GM10248 (cell line): ENCODE measurements at regions of chr5 and their contacts with region 1.

Region 1: DNA sequence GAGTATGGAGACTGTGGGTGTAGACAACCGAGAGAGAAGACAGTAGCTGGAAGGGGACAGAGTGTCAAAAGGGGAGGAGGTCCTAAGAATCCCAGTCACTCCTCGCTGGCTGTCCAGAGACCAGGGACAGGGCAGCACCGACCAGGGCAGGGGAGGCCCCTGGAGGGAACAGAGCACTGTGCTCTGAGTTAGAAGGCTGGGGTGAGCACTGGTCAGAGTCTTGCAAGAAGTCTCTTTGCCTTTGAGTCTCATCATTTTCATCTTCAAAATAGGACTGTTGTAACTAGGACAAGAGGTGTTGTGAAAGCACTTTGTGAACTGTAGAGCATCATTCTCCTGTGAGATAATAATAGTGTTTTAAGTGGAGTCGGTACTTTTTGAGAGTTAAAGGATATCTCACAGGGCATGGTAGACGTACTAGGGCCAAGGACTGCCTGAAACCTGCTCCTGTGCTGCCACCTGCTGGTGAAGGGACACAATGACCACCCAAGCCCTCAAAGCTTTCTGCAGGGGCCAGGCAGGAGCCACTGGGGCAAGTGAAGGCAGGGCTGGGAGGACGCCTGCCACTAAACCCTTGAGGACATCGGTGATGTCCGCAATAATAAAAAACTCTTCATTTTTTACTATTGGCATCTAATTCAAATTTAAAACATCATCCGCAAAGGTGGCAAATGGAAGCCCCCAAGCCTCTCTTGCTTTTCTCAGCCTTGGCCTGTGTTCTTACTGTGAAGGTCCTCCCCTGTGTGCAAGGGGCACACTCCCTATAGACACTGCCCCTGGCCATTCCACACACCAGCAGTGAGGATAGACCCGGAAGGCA is 28.2 kb downstream of the SLC6A7 start:
- DNase-seq: peak; percentile 90
- CTCF ChIP-seq: peak; percentile 86

Region 2: GRCh38 chr5:150122158-150122510 is 95.9 kb before region 1 on chr5:
- CTCF ChIA-PET with region 1: interaction called, 15 read pairs
- POLR2A ChIA-PET with region 1: no interaction called
- DNase-seq: peak; percentile 84
- CTCF ChIP-seq: peak; percentile 66

Region 3: GRCh38 chr5:150129813-150130492 is 88.1 kb before region 1 on chr5:
- CTCF ChIA-PET with region 1: interaction called, 20 read pairs
- POLR2A ChIA-PET with region 1: no interaction called
- DNase-seq: peak; percentile 86
- CTCF ChIP-seq: peak; percentile 86

Region 4: GRCh38 chr5:150203832-150204589 is 14.1 kb before region 1 on chr5:
- CTCF ChIA-PET with region 1: interaction called, 49 read pairs
- POLR2A ChIA-PET with region 1: no interaction called
- DNase-seq: no peak
- CTCF ChIP-seq: no peak

Region 5: DNA sequence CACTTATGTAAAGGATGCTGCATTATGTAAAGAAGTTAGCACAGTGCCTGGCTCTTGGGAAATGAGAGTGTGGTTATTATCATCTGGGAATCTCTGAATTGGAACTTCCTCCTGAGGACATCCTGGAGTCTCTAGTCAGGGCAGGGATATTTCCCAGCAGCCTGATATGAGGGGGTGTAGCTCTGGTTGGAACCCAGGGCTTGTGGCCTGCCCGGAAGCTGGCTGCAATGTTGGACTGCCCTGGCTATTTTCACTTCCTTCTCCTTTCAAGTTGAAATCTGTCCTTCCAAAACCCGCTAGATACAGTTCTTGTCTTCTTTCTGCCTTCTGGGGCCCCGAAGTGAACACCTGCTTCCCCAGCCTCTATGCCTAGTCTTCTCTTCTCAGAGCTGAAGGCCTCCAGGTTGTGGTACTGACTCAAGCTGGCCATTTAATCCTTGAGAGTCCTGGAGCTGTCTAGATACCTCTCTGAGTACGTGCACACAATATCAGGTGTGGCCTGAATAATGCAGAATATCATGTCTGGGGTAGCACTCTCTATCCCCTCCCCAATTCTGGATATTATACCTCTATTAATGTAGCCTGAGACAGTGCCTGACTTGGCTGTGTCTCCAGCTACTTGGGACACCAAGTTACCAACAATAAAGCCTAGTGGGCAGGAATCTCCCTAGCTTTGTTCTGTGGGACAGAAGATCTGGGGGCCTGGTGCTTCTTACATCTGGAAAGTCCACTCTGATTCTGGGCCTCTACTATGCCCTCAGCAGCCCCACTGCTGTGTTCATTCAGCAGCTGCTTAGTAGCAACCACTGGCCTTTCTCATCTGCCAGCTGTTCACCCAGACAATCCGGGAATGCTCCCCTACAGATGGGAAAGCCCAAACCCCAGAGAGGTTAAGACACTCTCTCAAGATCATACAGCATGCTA is 16.8 kb after region 1 on chr5:
- CTCF ChIA-PET with region 1: interaction called, 19 read pairs
- POLR2A ChIA-PET with region 1: no interaction called
- DNase-seq: no peak
- CTCF ChIP-seq: no peak